Prostate gland (tissue), 2 donors: ENCODE measurements at regions of chr14 and their contacts with region 1.

Region 1: DNA sequence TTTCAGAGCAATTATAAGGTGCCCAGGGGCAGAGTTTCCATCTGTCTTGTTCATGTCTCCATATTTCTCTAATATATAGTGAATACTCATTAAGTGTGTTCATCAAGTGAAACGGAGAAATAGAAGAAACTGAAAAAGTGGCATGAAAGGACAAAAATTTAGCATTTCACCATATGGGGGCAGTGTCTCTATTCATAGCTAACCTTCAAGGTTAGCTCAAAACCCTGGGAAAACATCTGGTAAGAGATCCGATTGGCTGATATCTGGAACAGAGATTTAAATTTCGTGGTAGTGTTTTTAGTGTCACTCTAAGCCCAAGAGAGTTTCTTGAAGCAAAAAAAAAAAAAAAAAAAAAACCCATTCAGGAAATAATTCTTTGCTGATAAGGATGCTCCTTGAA is 367.5 kb downstream of the DAD1 start:
- DNase-seq: no peak
- H3K4me3 ChIP-seq: no peak overlapping the region
- H3K27ac ChIP-seq: no peak overlapping the region
- H3K4me1 ChIP-seq: no peaks in the 10 kb centered on the region
- H3K27me3 ChIP-seq: no peaks in the 10 kb centered on the region
- CTCF ChIP-seq: no peak
- POLR2A ChIP-seq: no peak

Region 2: GRCh38 chr14:22319526-22320361 is 98.2 kb after region 1 on chr14:
- intact Hi-C with region 1: loop called (anchors 10 kb)
- DNase-seq: peak; percentile 63
- H3K4me3 ChIP-seq: no peak overlapping the region
- H3K27ac ChIP-seq: no peak overlapping the region
- H3K4me1 ChIP-seq: no peaks in the 10 kb centered on the region
- H3K27me3 ChIP-seq: no peaks in the 10 kb centered on the region
- CTCF ChIP-seq: peak; percentile 58 to 73 (median 64)
- POLR2A ChIP-seq: no peak

Region 3: GRCh38 chr14:22370084-22370847 is 148.8 kb after region 1 on chr14:
- intact Hi-C with region 1: loop called (anchors 5 kb)
- DNase-seq: peak; percentile 67
- H3K4me3 ChIP-seq: no peak overlapping the region
- H3K27ac ChIP-seq: peak overlapping the region in 1 of 2 donors; percentile 31
- H3K4me1 ChIP-seq: no peaks in the 10 kb centered on the region
- H3K27me3 ChIP-seq: no peaks in the 10 kb centered on the region
- CTCF ChIP-seq: no peak
- POLR2A ChIP-seq: no peak